HEK293T (cell line): ENCODE measurements at regions of chr11 and their contacts with region 1.

Region 1: DNA sequence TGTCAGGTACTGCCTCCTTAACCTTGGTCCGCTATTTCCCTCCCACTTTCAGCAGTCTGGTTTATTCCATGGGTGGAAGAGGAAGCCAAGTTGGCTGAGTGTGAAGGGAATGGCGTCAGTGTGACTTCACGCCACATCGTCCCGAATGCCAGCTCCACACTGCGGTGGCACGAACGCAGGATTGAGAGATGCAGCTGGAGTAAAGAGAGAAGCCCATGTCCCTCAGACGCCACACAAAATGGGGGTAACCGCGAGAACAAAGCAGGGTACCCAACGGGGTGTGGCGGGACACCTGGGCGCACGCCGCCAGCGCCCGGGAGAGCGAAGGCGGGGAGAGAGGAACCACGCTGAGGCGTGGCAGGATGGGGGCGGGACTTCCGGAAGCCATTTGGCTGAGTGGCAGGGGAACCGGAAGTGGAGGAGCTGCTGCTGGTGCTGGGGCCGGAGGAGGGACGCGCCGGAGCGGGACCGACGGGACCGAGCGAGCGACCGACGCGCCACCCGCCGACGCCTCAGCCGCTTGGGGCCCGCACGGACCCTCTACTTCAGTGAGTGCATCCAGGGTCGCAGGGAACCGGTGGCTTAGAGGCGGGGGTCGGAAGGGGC is at the start of gene PAFAH1B2:
- DNase-seq: peak; percentile 97

Region 2: GRCh38 chr11:117171404-117172061 is 27.6 kb after region 1 on chr11:
- CTCF ChIA-PET with region 1: interaction called, 3 read pairs
- POLR2A ChIA-PET with region 1: interaction called, 24 read pairs
- DNase-seq: no peak

Region 3: GRCh38 chr11:117178210-117179034 is 34.4 kb after region 1 on chr11 and contains the start of gene SIDT2:
- CTCF ChIA-PET with region 1: interaction called, 8 read pairs
- POLR2A ChIA-PET with region 1: interaction called, 58 read pairs
- DNase-seq: peak; percentile 91

Region 4: DNA sequence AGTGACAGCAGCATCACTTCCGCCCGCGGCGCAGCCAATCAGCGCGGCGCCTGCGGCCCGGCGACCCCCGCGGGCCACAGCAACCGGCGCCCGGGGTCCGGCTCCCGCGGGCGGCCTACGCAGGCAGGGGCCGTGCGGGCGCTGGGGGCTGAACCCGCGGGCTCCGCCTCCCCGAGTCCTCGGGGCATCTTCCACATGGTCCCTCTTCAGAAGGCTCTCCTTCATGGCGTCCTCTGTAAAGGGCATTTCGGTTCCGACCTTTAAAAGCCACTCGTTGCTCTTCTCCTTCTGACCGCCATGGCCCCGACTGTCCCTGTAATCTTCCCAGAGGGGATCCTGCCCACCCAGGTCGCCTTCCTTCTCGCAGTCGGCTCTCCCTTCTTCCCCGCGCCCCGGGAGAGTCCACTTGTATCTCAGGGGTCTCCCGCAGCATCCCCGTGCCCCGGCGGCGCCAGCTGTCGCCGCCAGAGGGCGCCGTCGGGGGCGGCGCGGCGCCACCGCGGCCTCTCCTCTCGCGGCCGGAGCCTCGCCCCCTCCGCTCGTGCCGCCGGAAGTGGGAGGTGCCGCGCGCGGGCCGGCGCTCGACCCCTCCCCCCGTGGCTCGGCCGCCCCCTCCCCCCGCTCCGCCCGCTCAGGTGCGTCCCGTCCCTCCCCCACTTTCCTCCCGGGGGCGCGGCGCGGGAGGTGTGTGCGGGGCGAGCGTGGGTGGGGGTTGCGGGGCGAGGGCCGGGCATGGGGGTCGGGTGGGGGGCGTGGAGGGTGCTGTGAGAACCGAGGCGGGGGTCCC is 88.3 kb after region 1 on chr11 and contains the start of gene RNF214:
- CTCF ChIA-PET with region 1: no interaction called
- POLR2A ChIA-PET with region 1: interaction called, 15 read pairs
- DNase-seq: peak; percentile 98